ENCODE measurements at regions of chr1 and their contacts with region 1.

Region 1: GRCh38 chr1:64242895-64243756 is 39.7 kb downstream of the UBE2U start:
- DNase-seq: peak in 1 of 2 experiments; percentile 6
- H3K4me3 ChIP-seq: no peak overlapping the region
- H3K4me3 Mint-ChIP-seq: no peak overlapping the region
- H3K27ac Mint-ChIP-seq: no peak overlapping the region
- H3K4me1 ChIP-seq: peaks cover 5% of the 10 kb centered on the region; the same call in 1 of the 2 replicates
- H3K4me1 Mint-ChIP-seq: peaks cover 6% of the 10 kb centered on the region
- H3K27me3 ChIP-seq: no peaks in the 10 kb centered on the region
- H3K27me3 Mint-ChIP-seq: no peaks in the 10 kb centered on the region
- CTCF ChIP-seq: peak in 1 of 2 experiments; percentile 13

Region 2: DNA sequence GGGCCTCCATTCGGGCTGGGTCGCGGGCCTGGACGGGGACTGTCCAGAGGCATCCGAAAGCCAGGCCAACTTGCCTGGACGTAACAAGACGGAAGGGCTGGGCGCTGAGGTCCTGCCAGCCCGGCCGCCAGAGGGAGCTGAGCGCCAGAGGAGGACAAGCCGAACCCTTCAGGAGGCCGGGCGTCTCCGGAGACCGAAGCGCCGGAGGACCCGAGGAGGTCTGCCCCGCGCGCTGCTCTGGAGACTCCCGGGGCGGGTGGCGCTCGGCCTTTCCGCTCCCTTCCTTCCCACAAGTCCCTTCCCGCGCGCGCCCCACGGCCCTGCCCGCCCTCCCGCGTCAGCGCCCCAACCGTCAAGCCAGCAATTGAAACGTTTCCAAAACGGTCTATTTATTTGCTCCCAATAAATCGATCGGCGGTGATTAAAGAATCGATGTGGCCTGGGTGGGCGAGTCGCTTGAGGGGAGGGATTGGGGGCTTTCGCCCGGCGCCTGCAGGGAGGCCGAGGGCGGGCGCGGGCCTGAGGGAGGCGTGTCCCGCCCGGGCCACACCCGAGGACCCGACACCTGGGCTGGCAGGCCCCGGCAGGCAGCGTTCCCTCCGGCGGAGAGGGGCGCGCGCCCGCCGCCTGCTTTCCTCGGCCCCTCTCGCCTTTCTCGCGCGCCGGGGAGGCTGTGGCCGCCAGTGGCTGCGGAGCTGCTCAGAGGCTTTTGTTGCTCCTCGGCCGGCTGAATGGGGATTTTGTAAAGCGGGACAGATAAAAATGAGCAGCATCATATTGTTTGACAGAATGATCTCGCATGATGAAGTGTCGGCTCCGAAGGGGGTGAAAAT is 925.9 kb before region 1 on chr1:
- CTCF ChIA-PET with region 1: no interaction called
- POLR2A ChIA-PET with region 1: no interaction called
- intact Hi-C with region 1: loop called (anchors 5 kb)
- DNase-seq: peak; percentile 81 to 83
- H3K4me3 ChIP-seq: peak overlapping the region; percentile 47
- H3K4me3 Mint-ChIP-seq: peak overlapping the region; percentile 62
- H3K27ac Mint-ChIP-seq: no peak overlapping the region
- H3K4me1 ChIP-seq: 0 out of 2 replicates have a peak, but pooled peaks cover 3% of the 10 kb centered on the region
- H3K4me1 Mint-ChIP-seq: no peaks in the 10 kb centered on the region
- H3K27me3 ChIP-seq: no peaks in the 10 kb centered on the region
- H3K27me3 Mint-ChIP-seq: peaks cover 26% of the 10 kb centered on the region
- CTCF ChIP-seq: peak; percentile 54 to 68

Region 3: GRCh38 chr1:63575340-63575826 is 667.7 kb before region 1 on chr1:
- CTCF ChIA-PET with region 1: interaction called, 4 read pairs
- POLR2A ChIA-PET with region 1: no interaction called
- intact Hi-C with region 1: loop called (anchors 1 kb)
- DNase-seq: peak in 1 of 2 experiments; percentile 16
- H3K4me3 ChIP-seq: no peak overlapping the region
- H3K4me3 Mint-ChIP-seq: no peak overlapping the region
- H3K27ac Mint-ChIP-seq: no peak overlapping the region
- H3K4me1 ChIP-seq: no peaks in the 10 kb centered on the region
- H3K4me1 Mint-ChIP-seq: no peaks in the 10 kb centered on the region
- H3K27me3 ChIP-seq: no peaks in the 10 kb centered on the region
- H3K27me3 Mint-ChIP-seq: no peaks in the 10 kb centered on the region
- CTCF ChIP-seq: peak; percentile 29 to 69

Region 4: DNA sequence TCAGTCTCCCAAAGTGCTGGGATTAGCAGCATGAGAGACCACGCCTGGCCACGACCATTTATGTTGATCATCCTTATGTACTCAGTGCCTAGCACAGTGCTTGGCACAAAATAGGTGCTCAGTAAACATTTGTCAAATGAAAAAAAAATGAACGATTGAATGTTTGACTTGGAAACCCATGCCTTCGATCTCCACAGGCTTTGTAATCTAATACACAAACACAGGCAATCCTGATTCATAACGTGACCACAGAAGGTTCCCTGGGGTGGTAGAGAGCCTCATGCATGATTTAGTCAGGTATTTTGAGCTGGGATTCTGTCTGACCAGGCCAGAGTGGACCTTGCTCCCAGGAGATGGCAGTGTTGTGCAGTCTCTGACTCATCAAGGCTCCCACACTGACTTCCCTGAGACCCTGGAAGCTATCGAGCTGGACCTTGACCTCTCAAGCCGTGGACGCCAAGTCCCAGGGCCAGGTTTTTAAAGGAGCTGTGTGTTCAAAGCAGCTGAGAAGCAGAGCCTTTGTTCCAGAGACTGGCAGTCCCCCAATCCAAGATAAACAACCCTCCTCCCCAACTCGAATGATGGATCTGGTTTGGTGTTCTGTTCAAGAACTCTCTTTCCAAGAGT is 568.8 kb before region 1 on chr1:
- CTCF ChIA-PET with region 1: interaction called, 18 read pairs
- POLR2A ChIA-PET with region 1: no interaction called
- intact Hi-C with region 1: loop called (anchors 1 kb)
- DNase-seq: peak; percentile 83 to 89
- H3K4me3 ChIP-seq: no peak overlapping the region
- H3K4me3 Mint-ChIP-seq: no peak overlapping the region
- H3K27ac Mint-ChIP-seq: peak overlapping the region; percentile 19
- H3K4me1 ChIP-seq: peaks cover 9% of the 10 kb centered on the region
- H3K4me1 Mint-ChIP-seq: peaks cover 16% of the 10 kb centered on the region
- H3K27me3 ChIP-seq: no peaks in the 10 kb centered on the region
- H3K27me3 Mint-ChIP-seq: no peaks in the 10 kb centered on the region
- CTCF ChIP-seq: peak; percentile 38 to 56

Region 5: GRCh38 chr1:63773815-63774616 is 469.1 kb before region 1 on chr1 and contains the start of gene ROR1:
- CTCF ChIA-PET with region 1: no interaction called
- POLR2A ChIA-PET with region 1: no interaction called
- intact Hi-C with region 1: loop called (anchors 5 kb)
- DNase-seq: peak; percentile 87 to 90
- H3K4me3 ChIP-seq: peak within 1 kb of the TSS; percentile 84
- H3K4me3 Mint-ChIP-seq: peak within 1 kb of the TSS; percentile 97
- H3K27ac Mint-ChIP-seq: peak within 1 kb of the TSS; percentile 77
- H3K4me1 ChIP-seq: peaks cover 13% of the 10 kb centered on the region
- H3K4me1 Mint-ChIP-seq: peaks cover 12% of the 10 kb centered on the region
- H3K27me3 ChIP-seq: no peaks in the 10 kb centered on the region
- H3K27me3 Mint-ChIP-seq: no peaks in the 10 kb centered on the region
- CTCF ChIP-seq: peak; percentile 32 to 64
- total RNA-seq, gene ROR1: 37.2 TPM in 2 replicates

Region 6: GRCh38 chr1:64163970-64164369 is 79.2 kb before region 1 on chr1:
- CTCF ChIA-PET with region 1: no interaction called
- POLR2A ChIA-PET with region 1: no interaction called
- intact Hi-C with region 1: loop called (anchors 5 kb)
- DNase-seq: no peak
- H3K4me3 ChIP-seq: no peak overlapping the region
- H3K4me3 Mint-ChIP-seq: no peak overlapping the region
- H3K27ac Mint-ChIP-seq: no peak overlapping the region
- H3K4me1 ChIP-seq: no peaks in the 10 kb centered on the region
- H3K4me1 Mint-ChIP-seq: peaks cover 7% of the 10 kb centered on the region
- H3K27me3 ChIP-seq: no peaks in the 10 kb centered on the region
- H3K27me3 Mint-ChIP-seq: no peaks in the 10 kb centered on the region
- CTCF ChIP-seq: peak in 1 of 2 experiments; percentile 27

Region 7: DNA sequence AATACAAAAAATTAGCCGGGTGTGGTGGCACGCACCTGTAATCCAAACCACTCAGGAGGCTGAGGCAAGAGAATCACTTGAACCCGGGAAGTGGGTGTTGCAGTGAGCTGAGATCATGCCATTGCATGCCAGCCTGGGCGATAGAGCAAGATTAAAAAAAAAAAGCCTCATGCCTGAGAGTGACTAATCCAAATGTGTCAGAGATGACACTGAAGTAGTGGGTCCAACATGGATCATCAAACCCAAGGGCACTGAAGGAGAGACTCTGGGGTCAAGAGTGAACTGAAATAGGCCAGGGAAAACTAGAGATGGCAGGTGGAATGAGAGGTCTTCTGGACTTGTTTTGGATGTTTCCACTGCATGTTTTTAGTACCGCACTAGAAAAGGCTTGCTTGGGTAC is 216.6 kb after region 1 on chr1:
- CTCF ChIA-PET with region 1: no interaction called
- POLR2A ChIA-PET with region 1: no interaction called
- intact Hi-C with region 1: no loop called
- DNase-seq: no peak
- H3K4me3 ChIP-seq: no peak overlapping the region
- H3K4me3 Mint-ChIP-seq: no peak overlapping the region
- H3K27ac Mint-ChIP-seq: no peak overlapping the region
- H3K4me1 ChIP-seq: no peaks in the 10 kb centered on the region
- H3K4me1 Mint-ChIP-seq: no peaks in the 10 kb centered on the region
- H3K27me3 ChIP-seq: no peaks in the 10 kb centered on the region
- H3K27me3 Mint-ChIP-seq: no peaks in the 10 kb centered on the region
- CTCF ChIP-seq: no peak